T-cell (primary cell): ENCODE measurements at regions of chr1 and their contacts with region 1.

Region 1: DNA sequence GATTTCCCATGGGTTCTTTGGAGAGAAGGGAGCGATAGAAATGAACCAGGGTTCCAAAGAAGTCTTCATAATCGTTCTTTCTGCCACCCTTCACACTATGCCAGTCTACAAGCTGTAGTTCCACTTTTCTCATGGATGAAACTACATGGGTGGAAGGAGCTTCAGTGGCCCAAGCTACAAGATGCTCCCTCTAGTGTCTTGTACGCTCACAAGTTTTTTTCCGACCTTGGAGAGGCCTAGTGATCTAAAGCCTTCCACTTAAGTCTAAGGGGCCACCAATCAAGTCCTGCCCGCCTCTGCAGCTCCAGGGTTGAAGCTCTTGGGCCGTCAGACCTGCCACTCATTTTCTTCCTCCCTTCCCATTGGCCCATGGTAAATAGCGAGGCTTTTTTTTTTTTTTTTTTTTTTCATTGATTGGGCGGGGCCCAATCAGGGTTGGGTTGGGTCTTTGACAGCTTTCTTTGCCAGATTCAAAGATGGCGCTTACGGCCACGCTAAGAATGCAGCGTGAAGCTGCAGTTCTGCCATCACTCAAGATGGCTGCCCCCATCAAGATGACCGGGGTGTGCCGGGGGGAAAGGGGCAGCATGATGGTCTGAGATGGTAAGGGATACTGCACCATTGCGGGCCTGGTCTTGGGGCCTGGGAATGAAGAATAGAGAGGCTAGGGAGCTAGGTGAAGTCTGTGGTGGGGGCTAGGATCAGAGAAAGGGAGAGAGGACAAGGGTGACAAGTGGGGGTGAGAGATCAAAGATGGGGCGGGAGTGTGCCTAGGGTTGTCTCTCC is at the start of gene TOMM40L:
- DNase-seq: peak; percentile 75 to 97 (median 87)
- ATAC-seq: peak; percentile 94 to 97 (median 94)
- H3K4me3 ChIP-seq: peak within 1 kb of the TSS; percentile 71 to 86
- H3K4me3 Mint-ChIP-seq: peak within 1 kb of the TSS; percentile 89 to 100 (median 99)
- H3K27ac ChIP-seq: peak within 1 kb of the TSS; percentile 75
- H3K27ac Mint-ChIP-seq: peak within 1 kb of the TSS; percentile 96 to 98
- H3K4me1 ChIP-seq: peaks cover 15 to 31% of the 10 kb centered on the region in 2 experiments
- H3K4me1 Mint-ChIP-seq: peaks cover 36 to 48% (median 38%) of the 10 kb centered on the region in 3 donors
- H3K27me3 ChIP-seq: no peaks in the 10 kb centered on the region
- H3K27me3 Mint-ChIP-seq: no peaks in the 10 kb centered on the region
- total RNA-seq, gene TOMM40L: 6.3 to 12.2 (median 11.0) TPM

Region 2: GRCh38 chr1:160284782-160285344 is 940.9 kb before region 1 on chr1 and contains the start of gene PEX19:
- CTCF ChIA-PET with region 1: no interaction called
- POLR2A ChIA-PET with region 1: interaction called in 1 of 2 experiments, 11 read pairs
- DNase-seq: peak; percentile 85 to 96 (median 91)
- ATAC-seq: peak; percentile 99 to 100 (median 100)
- H3K4me3 ChIP-seq: peak within 1 kb of the TSS; percentile 68 to 69
- H3K4me3 Mint-ChIP-seq: peak within 1 kb of the TSS; percentile 97 to 99 (median 99)
- H3K27ac ChIP-seq: peak within 1 kb of the TSS; percentile 45
- H3K27ac Mint-ChIP-seq: peak within 1 kb of the TSS; percentile 94 to 95
- H3K4me1 ChIP-seq: peaks cover 7 to 23% of the 10 kb centered on the region in 2 experiments
- H3K4me1 Mint-ChIP-seq: peaks cover 28 to 30% (median 28%) of the 10 kb centered on the region in 3 donors
- H3K27me3 ChIP-seq: no peaks in the 10 kb centered on the region
- H3K27me3 Mint-ChIP-seq: no peaks in the 10 kb centered on the region
- total RNA-seq, gene PEX19: 49.8 to 59.5 (median 53.3) TPM

Region 3: DNA sequence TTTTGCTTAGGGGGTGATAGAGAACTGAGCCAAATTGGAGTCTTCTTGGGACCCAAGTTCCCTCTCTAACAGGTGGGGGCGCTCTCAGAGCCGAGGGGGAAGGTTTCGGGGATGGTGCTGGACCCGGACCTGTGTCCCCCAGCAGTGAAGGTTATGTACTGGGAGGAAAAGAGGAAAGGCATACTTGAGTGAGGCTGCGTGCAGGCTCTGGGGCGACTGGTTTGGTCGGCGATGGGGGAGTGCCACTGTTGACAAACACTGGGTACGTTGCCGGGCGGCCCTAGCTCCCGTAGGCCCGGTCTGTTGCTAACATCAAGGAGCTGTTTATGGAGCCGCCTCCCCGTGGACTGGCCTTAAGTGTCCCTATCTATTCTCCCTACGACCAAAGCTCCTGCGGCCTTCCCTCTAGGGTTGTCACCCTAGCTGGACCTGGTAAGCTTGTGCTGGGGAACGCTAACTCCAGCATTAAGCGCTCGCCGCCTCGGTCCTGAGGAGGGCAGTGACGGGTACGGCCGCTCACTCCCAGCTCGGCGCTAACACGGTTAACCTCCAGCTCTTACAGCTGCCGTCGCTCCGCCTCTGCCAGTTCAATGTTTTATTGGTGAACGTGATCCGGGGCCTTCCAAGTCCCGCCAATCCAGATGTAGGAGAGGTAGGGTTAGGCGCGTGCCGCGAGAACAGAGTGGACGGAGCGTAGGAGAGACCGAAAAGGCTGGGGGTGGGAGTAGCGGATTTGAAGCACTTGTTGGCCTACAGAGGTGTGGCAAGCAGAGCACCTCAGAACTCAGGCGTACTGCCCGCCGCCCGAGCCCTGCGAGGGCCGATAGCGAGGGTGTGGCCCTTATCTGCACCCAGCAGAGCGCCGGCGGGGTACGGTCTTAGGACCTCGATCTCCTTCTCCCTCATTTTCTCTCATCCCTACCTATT is 59.7 kb before region 1 on chr1 and contains the start of gene PPOX:
- CTCF ChIA-PET with region 1: interaction called in 1 of 2 experiments, 29 read pairs
- POLR2A ChIA-PET with region 1: interaction called in 1 of 2 experiments, 7 read pairs
- DNase-seq: peak; percentile 73 to 96 (median 91)
- ATAC-seq: peak; percentile 91 to 95 (median 94)
- H3K4me3 ChIP-seq: peak within 1 kb of the TSS; percentile 87 to 88
- H3K4me3 Mint-ChIP-seq: peak within 1 kb of the TSS; percentile 72 to 88 (median 87)
- H3K27ac ChIP-seq: peak within 1 kb of the TSS; percentile 97
- H3K27ac Mint-ChIP-seq: peak within 1 kb of the TSS; percentile 96 to 99
- H3K4me1 ChIP-seq: peaks cover 7 to 39% of the 10 kb centered on the region in 2 experiments
- H3K4me1 Mint-ChIP-seq: peaks cover 51 to 61% (median 61%) of the 10 kb centered on the region in 3 donors
- H3K27me3 ChIP-seq: no peaks in the 10 kb centered on the region
- H3K27me3 Mint-ChIP-seq: no peaks in the 10 kb centered on the region
- total RNA-seq, gene PPOX: 38.3 to 85.4 (median 69.2) TPM

Region 4: DNA sequence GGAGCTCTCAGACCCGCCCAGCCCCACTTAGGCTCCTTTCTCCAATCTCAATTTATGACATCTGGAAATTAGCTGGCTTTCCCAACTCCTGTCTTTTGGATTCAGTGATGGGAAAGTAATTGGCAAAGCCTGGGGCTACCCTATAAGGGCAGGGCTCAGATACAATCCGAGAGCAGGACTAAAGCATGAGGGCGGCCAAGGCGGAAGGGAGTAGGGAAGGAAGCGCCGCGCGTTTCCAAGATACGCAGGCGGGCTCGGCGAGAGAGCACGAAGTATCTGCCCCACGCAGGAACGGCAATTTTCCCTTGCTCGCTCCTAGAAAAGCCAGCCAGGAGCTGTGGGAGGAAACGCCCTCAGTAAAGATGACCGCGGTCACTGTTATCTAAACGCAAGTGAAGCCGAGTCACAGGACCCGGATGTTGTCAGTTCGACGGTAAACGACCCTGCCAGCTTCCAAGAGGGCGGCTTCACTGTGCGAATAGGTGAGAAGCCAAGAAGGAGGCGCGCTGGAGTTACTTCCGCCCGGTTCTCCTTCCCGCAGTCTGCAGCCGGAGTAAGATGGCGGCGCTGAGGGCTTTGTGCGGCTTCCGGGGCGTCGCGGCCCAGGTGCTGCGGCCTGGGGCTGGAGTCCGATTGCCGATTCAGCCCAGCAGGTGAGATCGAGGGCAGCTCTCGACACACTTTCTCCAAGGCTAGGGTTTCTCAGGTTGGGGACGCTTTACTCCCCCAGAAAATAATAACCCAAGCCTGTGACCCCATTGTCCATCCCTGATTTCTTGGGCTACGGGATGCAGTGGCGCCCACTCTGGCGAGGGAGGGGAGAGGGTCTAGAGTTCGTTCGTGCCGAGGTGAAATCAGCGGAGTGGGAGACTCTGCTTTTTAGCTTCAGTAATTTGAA is 23.6 kb before region 1 on chr1 and contains the start of gene NDUFS2:
- CTCF ChIA-PET with region 1: interaction called, 3 to 76 read pairs
- POLR2A ChIA-PET with region 1: interaction called, 3 to 13 read pairs
- DNase-seq: peak; percentile 82 to 99 (median 96)
- ATAC-seq: peak; percentile 98
- H3K4me3 ChIP-seq: peak within 1 kb of the TSS; percentile 90 to 91
- H3K4me3 Mint-ChIP-seq: peak within 1 kb of the TSS; percentile 93 to 95 (median 95)
- H3K27ac ChIP-seq: peak within 1 kb of the TSS; percentile 79
- H3K27ac Mint-ChIP-seq: peak within 1 kb of the TSS; percentile 97 to 98
- H3K4me1 ChIP-seq: peaks cover 22 to 49% of the 10 kb centered on the region in 2 experiments
- H3K4me1 Mint-ChIP-seq: peaks cover 64 to 72% (median 72%) of the 10 kb centered on the region in 3 donors
- H3K27me3 ChIP-seq: no peaks in the 10 kb centered on the region
- H3K27me3 Mint-ChIP-seq: no peaks in the 10 kb centered on the region
- total RNA-seq, gene NDUFS2: 57.3 to 92.2 (median 88.2) TPM

Region 5: DNA sequence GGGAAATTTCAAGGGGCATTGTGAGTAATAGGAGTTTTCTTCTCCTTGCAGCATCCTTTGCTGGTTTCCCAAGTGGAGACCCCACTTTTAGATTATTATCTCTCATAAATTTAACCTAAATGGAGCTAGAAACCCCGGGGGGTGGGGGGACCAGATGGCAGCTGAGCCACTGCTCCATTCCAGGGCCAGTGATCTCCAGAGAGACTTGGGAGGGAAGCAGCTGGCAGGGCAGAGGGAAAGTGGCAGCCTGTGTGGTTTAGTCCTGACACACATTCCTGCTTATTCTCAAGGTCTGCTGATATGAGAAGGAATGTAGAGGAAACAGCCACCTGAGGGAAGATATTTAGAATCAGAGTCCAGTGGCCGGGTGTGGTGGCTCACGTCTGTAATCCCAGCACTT is 49.1 kb after region 1 on chr1:
- CTCF ChIA-PET with region 1: no interaction called
- POLR2A ChIA-PET with region 1: no interaction called
- DNase-seq: no peak
- ATAC-seq: no peak
- H3K4me3 ChIP-seq: no peak overlapping the region
- H3K4me3 Mint-ChIP-seq: no peak overlapping the region
- H3K27ac ChIP-seq: no peak overlapping the region
- H3K27ac Mint-ChIP-seq: no peak overlapping the region
- H3K4me1 ChIP-seq: no peaks in the 10 kb centered on the region
- H3K4me1 Mint-ChIP-seq: no peaks in the 10 kb centered on the region
- H3K27me3 ChIP-seq: peaks cover 4% of the 10 kb centered on the region in 2 experiments
- H3K27me3 Mint-ChIP-seq: peaks cover 14 to 18% of the 10 kb centered on the region in 2 donors

Region 6: DNA sequence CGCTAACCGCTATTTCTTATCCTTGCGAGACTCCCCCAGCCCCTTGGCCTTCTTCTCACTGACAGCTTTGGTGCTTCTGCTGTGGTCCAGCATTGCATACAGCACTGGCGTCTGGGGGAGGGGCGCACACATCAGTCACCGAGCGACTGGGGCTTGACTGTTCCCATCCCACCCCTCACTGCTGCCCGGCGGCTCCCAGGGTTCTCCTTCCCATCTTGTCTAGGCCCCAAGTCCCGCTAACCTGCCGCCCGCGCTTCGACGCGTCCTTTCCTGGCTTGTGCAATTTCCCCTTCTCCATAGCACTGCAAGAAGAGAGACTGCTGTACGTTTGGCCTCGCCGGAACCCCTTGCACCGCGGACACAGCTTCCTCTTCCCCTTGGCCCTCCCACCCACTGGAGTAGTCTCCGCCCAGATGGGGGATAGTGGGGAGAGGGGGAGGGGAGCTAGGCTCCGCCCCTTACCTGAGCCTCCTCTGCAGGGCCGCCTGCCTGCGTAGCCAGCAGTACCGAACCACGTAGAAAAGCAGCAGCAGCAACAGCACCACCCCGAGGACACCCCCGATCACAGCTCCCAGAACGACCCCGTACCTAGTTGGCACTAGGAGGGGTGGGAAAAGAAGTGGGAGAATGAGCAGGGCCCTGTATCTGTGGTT is 80.3 kb after region 1 on chr1:
- CTCF ChIA-PET with region 1: interaction called in 1 of 2 experiments, 36 read pairs
- POLR2A ChIA-PET with region 1: interaction called in 1 of 2 experiments, 11 read pairs
- DNase-seq: peak; percentile 79 to 94 (median 87)
- ATAC-seq: peak; percentile 97 to 99 (median 98)
- H3K4me3 ChIP-seq: peak overlapping the region; percentile 79 to 91
- H3K4me3 Mint-ChIP-seq: peak overlapping the region; percentile 92 to 98 (median 98)
- H3K27ac ChIP-seq: peak overlapping the region; percentile 80
- H3K27ac Mint-ChIP-seq: peak overlapping the region; percentile 94
- H3K4me1 ChIP-seq: peaks cover 11 to 27% of the 10 kb centered on the region in 2 experiments
- H3K4me1 Mint-ChIP-seq: peaks cover 33 to 42% (median 41%) of the 10 kb centered on the region in 3 donors
- H3K27me3 ChIP-seq: no peaks in the 10 kb centered on the region
- H3K27me3 Mint-ChIP-seq: no peaks in the 10 kb centered on the region

Region 7: DNA sequence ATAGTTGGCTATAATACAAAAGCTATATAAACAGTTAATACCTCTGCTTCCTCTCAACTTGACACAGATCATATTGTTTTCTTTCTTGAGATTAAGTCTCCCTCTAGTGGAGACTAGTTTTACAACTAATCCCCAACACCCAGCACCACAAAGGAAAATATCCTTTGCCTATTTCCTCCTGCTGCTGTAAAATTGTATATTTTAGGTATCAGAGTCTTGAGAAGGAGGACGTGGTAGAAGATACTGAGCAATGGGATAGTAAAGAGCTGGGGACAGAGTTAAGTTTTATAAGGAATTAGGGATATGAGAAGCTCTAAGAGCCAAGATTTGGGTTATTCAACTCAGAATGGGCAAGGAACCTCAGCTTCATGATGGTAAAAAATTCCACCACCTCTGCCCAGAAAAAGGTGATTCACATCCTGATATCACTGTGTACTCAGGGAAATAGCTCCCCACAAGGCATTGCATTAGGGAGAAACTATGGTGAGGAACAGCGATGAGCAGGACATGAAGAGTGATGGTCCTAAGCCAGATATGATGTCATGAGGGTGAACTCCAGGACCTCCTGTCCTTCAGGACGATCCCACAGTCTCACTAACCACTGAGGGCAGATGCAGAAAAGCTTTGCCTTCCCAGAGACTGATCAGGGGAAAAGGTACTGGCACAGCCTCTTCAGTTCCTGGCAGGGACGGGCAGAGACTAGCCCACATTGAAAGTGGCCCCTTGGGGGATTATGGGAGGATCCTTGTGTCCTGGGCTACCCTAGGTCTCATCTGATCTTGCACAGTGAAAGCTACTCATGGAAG is 156.7 kb after region 1 on chr1:
- CTCF ChIA-PET with region 1: interaction called, 8 to 36 read pairs
- POLR2A ChIA-PET with region 1: no interaction called
- DNase-seq: peak in 1 of 35 experiments; percentile 70
- ATAC-seq: peak; percentile 79 to 84 (median 82)
- H3K4me3 ChIP-seq: no peak overlapping the region
- H3K4me3 Mint-ChIP-seq: no peak overlapping the region
- H3K27ac ChIP-seq: no peak overlapping the region
- H3K27ac Mint-ChIP-seq: no peak overlapping the region
- H3K4me1 ChIP-seq: peaks cover 0 to 5% of the 10 kb centered on the region in 2 experiments
- H3K4me1 Mint-ChIP-seq: peaks cover 14 to 24% (median 19%) of the 10 kb centered on the region in 3 donors
- H3K27me3 ChIP-seq: peaks cover 0 to 5% of the 10 kb centered on the region in 2 experiments
- H3K27me3 Mint-ChIP-seq: no peaks in the 10 kb centered on the region